HCT116 (cell line): ENCODE measurements at regions of chr1 and their contacts with region 1.

Region 1: GRCh38 chr1:84247425-84248220 is 53.9 kb upstream of the SAMD13 start:
- DNase-seq: peak; percentile 93
- ATAC-seq: peak; percentile 91
- H3K4me3 ChIP-seq: peak overlapping the region in 1 of 2 experiments; percentile 10; a peak in 3 of 4 replicates
- H3K27ac ChIP-seq: peak overlapping the region; percentile 95
- H3K4me1 ChIP-seq: peaks cover 40 to 47% of the 10 kb centered on the region in 2 experiments
- H3K27me3 ChIP-seq: no peaks in the 10 kb centered on the region
- CTCF ChIP-seq: no peak
- POLR2A ChIP-seq: no peak
- RAD21 ChIP-seq: peak; percentile 36

Region 2: GRCh38 chr1:83670909-83671565 is 576.6 kb before region 1 on chr1:
- CTCF ChIA-PET with region 1: no interaction called
- POLR2A ChIA-PET with region 1: no interaction called
- RAD21 ChIA-PET with region 1: no interaction called
- intact Hi-C with region 1: no loop called
- DNase-seq: no peak
- ATAC-seq: no peak
- H3K4me3 ChIP-seq: no peak overlapping the region
- H3K27ac ChIP-seq: no peak overlapping the region
- H3K4me1 ChIP-seq: no peaks in the 10 kb centered on the region
- H3K27me3 ChIP-seq: no peaks in the 10 kb centered on the region
- CTCF ChIP-seq: no peak
- POLR2A ChIP-seq: no peak
- RAD21 ChIP-seq: no peak

Region 3: DNA sequence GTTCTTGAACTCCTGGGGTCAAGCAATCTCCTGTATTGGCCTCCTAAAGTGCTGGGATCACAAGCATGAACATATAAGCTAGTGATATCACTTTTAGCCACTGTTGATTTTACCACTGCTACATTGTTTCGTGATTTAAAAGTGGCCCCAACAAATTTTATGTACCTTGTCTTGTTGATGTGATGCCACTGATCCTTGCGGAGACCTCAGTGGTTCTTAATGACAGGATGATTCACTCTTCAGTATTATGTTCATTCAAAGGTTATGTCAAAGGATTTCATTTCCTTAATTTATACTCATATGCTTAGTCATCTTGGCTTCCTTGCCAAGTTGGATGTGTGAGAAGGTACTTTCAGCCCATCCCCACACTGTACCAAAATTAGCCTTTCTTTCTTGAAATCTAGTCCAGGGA is 91.4 kb before region 1 on chr1:
- CTCF ChIA-PET with region 1: no interaction called
- POLR2A ChIA-PET with region 1: no interaction called
- RAD21 ChIA-PET with region 1: no interaction called
- intact Hi-C with region 1: loop called (anchors 5 kb)
- DNase-seq: peak; percentile 97
- ATAC-seq: peak; percentile 87
- H3K4me3 ChIP-seq: no peak overlapping the region
- H3K27ac ChIP-seq: peak overlapping the region; percentile 99
- H3K4me1 ChIP-seq: peaks cover 59 to 87% of the 10 kb centered on the region in 2 experiments
- H3K27me3 ChIP-seq: no peaks in the 10 kb centered on the region
- CTCF ChIP-seq: no peak
- POLR2A ChIP-seq: no peak
- RAD21 ChIP-seq: peak; percentile 55

Region 4: GRCh38 chr1:84174051-84174556 is 73.5 kb before region 1 on chr1:
- CTCF ChIA-PET with region 1: no interaction called
- POLR2A ChIA-PET with region 1: interaction called, 3 read pairs
- RAD21 ChIA-PET with region 1: no interaction called
- intact Hi-C with region 1: loop called (anchors 5 kb)
- DNase-seq: peak; percentile 94
- ATAC-seq: peak; percentile 90
- H3K4me3 ChIP-seq: peak overlapping the region; percentile 33 to 45
- H3K27ac ChIP-seq: peak overlapping the region; percentile 99
- H3K4me1 ChIP-seq: peaks cover 89 to 97% of the 10 kb centered on the region in 2 experiments
- H3K27me3 ChIP-seq: no peaks in the 10 kb centered on the region
- CTCF ChIP-seq: no peak
- POLR2A ChIP-seq: no peak
- RAD21 ChIP-seq: peak; percentile 39

Region 5: GRCh38 chr1:84365225-84366221 is 117.9 kb after region 1 on chr1:
- CTCF ChIA-PET with region 1: no interaction called
- POLR2A ChIA-PET with region 1: no interaction called
- RAD21 ChIA-PET with region 1: no interaction called
- intact Hi-C with region 1: loop called (anchors 5 kb)
- DNase-seq: peak; percentile 99
- ATAC-seq: peak; percentile 87
- H3K4me3 ChIP-seq: peak overlapping the region in 1 of 2 experiments; percentile 1; a peak in 1 of 4 replicates
- H3K27ac ChIP-seq: peak overlapping the region; percentile 99
- H3K4me1 ChIP-seq: peaks cover 38 to 63% of the 10 kb centered on the region in 2 experiments
- H3K27me3 ChIP-seq: no peaks in the 10 kb centered on the region
- CTCF ChIP-seq: no peak
- POLR2A ChIP-seq: peak; percentile 8
- RAD21 ChIP-seq: peak; percentile 40; the same call in 1 of the 2 replicates